Right ventricle myocardium superior (tissue), 1 donor: ENCODE measurements at regions of chr1 and their contacts with region 1.

Region 1: GRCh38 chr1:29444782-29445729 is 208.7 kb downstream of the PTPRU start:
- DNase-seq: no peak
- ATAC-seq: no peak

Region 2: DNA sequence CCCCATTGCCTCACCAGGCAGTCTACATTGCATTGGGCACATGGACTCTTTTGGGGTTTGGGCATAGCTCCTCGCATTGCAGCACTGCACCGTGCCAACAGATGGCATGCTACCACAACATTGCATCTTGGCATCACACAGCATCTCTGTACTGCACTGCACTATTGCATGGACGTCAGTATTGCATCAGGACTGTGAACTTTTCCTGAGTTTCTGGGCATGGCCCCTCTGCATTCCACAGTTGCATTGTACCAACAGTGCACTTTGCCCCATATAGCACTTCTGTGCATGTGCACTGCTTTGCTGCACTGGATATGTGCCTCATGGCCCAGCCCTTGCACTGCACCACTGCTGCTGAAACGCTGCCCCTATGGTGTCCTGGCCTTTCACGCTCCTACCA is 199.2 kb before region 1 on chr1:
- intact Hi-C with region 1: loop called (anchors 10 kb)
- DNase-seq: no peak
- ATAC-seq: peak; percentile 53